ENCODE measurements at regions of chr1 and their contacts with region 1.

Region 1: GRCh38 chr1:85584264-85584781 is 3.8 kb downstream of the CCN1 start:
- DNase-seq: peak; percentile 97
- H3K4me3 ChIP-seq: peak overlapping the region; percentile 98
- CTCF ChIP-seq: no peak

Region 2: DNA sequence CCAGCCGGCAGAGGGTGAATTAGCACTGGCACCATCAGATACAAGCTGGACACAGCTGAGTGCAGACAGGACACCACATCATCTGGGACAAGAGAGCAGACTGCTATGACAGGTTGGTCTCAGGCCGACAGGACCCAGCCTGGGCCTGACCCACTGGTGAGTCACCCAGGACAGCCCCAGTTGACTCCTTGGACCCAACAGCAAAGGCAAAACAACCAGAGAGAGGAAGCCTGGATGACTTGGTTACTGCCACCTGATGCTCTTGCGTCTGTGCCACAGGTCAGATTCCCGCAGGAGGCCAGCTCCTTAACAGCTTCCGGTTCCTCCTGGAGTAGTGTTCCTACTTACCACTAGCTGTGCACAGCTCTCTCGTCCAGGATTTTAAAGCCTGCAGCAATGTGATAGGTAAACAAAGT is 14.8 kb after region 1 on chr1:
- CTCF ChIA-PET with region 1: interaction called, 15 read pairs
- POLR2A ChIA-PET with region 1: interaction called, 11 read pairs
- DNase-seq: no peak
- H3K4me3 ChIP-seq: no peak overlapping the region
- CTCF ChIP-seq: no peak

Region 3: DNA sequence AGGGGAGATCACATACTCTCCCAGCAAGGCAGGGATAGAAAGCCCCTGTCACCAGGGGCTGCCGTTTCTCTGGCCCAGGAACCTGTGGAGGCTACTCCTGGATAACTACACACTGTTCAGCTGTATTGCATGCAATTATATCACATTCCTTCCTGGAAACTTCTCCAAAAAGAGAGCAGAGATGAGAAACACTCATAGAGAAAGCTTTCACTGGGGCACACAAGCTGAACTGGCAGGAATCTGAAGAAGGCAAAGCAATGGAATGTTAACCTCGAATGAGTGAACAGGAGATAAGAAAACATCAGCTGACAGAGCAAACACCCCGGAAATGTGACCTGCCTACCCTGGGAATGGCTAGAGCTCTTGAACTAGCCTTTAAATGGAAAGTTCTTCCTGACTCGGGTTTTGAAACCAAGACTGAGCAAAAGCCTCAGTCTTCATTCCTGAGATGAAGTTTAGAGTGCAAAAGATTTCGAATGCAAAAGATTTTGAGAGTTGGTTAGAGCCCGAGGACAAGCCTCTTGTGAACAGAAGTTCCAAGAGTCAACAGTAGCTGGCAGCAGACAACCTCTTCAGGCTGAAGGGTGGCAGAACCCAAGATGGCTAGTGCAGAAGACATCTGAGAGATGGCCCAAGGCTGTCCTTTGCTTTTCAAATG is 28.5 kb after region 1 on chr1:
- CTCF ChIA-PET with region 1: interaction called, 15 read pairs
- POLR2A ChIA-PET with region 1: interaction called, 156 read pairs
- DNase-seq: peak; percentile 97
- H3K4me3 ChIP-seq: no peak overlapping the region
- CTCF ChIP-seq: peak; percentile 58

Region 4: DNA sequence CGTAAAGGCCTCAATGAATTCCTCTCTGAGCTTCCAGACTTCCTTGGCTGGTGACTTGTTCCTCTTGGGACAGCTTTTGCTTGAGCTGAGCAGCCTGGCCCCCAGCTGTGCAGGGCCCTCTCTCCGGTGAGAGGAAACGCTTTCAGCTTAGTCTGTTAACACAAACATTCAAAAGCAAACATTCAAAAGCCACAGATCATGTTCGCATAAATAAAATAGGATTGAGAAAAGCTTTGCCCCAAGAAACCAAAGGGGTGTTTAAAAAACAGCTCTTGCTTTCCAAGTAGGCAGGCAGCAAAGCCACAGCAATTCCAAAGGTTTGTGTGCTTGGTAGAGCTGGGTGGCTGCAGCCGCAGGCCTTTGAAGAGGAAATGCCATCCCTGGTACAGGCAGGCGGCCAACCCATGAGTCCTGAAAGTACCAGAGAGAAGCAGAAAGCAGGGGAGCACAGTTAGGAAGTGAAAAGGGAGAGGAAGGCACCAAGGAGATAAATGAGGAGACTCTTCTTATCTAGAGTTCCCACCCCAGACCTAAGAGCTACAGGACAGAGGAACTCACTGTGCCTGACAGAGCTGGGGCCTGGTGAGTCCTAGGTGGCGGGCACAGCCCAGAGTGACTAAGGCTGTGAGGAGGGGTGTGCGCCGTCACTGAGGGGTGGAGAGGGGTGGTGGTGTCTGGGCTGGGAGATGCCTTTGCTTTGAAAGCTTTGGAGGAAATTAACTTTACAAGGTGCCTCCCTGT is 44.6 kb after region 1 on chr1:
- CTCF ChIA-PET with region 1: interaction called, 3 read pairs
- POLR2A ChIA-PET with region 1: interaction called, 52 read pairs
- DNase-seq: peak; percentile 92
- H3K4me3 ChIP-seq: peak overlapping the region; percentile 46
- CTCF ChIP-seq: no peak

Region 5: GRCh38 chr1:85707990-85708828 is 123.9 kb after region 1 on chr1 and contains the start of gene ZNHIT6:
- CTCF ChIA-PET with region 1: no interaction called
- POLR2A ChIA-PET with region 1: interaction called, 10 read pairs
- DNase-seq: peak; percentile 86
- H3K4me3 ChIP-seq: peak within 1 kb of the TSS; percentile 90
- CTCF ChIP-seq: peak; percentile 29

Measured in AG04449 (cell line).